MCF 10A (cell line): ENCODE measurements at regions of chr11 and their contacts with region 1.

Region 1: DNA sequence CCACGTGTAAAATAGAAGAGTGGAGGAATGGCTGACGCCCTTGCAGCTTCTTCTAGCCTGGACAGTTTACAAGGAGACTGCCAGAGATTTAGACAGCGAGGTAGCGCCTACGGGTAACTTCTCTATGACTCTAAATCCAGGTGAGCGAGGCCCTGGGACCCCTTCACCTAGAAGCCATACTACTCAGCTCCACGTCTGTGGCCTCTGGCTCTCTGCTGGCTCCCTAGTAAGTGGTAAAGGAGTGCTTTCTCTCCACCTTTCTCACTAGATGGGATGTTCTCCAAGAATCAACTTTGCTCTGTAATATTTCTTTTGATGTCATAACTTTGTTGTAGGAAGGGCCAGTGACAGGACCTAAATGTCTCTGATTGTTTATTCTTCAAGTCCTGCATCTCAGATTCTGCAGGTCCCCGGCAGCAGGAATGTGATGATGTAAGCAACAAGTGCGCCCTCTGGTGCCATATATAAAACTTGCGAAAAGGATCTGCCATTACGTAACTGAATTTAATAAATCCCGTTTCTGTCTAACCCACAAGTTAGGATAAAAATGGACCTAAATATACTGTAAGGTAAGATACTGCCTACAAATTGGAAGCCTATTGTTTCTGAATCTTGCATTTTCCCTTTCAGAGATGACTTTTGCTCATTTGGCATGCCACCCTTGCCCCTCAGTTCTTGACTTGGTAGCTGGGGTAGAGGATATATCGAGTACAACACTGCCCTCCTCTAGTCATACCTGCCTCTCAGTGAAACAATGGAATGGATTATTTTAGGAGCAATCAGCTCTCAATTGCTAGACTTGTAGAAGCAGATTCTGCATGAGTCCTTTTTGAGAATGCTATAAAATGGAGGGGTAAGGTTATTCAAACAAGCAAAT is 11.0 kb upstream of the PTPN5 start:
- DNase-seq: peak; percentile 66
- H3K4me3 Mint-ChIP-seq: no peak overlapping the region
- H3K27ac Mint-ChIP-seq: no peak overlapping the region
- H3K4me1 Mint-ChIP-seq: no peaks in the 10 kb centered on the region
- H3K27me3 Mint-ChIP-seq: peaks cover 84% of the 10 kb centered on the region
- CTCF ChIP-seq: peak; percentile 50

Region 2: DNA sequence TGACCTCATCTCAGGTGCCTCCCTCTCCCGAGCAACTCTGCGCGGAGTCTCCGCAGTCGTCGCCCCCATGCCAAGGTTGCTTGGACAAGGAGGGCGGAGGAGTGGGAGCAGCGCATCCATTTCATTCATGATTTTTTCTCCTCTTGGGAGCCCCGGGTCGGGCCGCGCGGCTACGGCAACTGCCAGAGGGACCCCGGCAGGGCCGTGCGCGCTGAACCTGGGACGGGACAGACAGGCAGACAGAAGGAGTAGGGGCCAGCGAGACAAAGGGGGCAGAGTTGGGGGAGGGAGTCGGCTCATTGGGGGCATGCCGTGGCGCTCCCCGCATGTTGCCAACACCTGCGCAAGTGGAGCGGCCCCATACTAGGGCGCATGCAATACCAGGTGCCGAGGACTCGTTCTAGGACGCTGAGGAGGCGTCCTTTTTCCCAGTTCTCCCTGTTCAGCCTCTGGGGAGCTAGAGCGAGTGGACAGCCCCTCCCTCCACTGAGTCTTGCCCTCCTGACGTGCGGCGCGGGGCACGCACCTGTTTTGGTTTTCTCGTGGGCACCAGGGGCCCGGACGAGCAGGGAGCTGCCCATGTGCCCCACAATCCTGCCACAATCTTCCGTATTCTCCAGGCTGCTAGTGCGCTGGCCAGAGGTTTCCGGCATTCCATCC is 10.5 kb before region 1 on chr11:
- CTCF ChIA-PET with region 1: interaction called, 10 read pairs
- POLR2A ChIA-PET with region 1: no interaction called
- intact Hi-C with region 1: no loop called
- DNase-seq: no peak
- H3K4me3 Mint-ChIP-seq: no peak overlapping the region
- H3K27ac Mint-ChIP-seq: no peak overlapping the region
- H3K4me1 Mint-ChIP-seq: no peaks in the 10 kb centered on the region
- H3K27me3 Mint-ChIP-seq: peaks cover 76% of the 10 kb centered on the region
- CTCF ChIP-seq: no peak

Region 3: DNA sequence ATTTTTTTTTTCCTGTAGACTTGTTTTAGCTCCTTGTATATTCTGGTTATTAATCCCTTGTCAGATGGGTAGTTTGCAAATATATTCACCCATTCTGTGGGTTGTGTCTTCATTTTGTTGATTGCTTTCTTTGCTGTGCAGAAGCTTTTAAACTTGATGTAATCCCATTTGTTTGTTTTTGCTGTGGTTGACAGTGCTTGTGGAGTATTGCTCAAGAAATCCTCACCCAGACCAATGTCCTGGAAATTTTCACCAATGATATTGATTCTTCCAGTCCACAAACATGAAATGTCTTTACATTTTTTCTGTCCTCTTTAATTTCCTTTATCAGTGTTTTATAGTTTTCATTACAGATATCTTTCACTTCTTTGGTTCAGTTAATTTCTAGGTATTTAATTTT is 192.2 kb after region 1 on chr11:
- CTCF ChIA-PET with region 1: no interaction called
- POLR2A ChIA-PET with region 1: no interaction called
- intact Hi-C with region 1: no loop called
- DNase-seq: no peak
- H3K4me3 Mint-ChIP-seq: no peak overlapping the region
- H3K27ac Mint-ChIP-seq: no peak overlapping the region
- H3K4me1 Mint-ChIP-seq: no peaks in the 10 kb centered on the region
- H3K27me3 Mint-ChIP-seq: peaks cover 97% of the 10 kb centered on the region
- CTCF ChIP-seq: no peak